ENCODE measurements at regions of chr1 and their contacts with region 1.

Region 1: GRCh38 chr1:162678439-162678838 is 46.2 kb downstream of the DDR2 start:
- DNase-seq: no peak
- H3K4me3 ChIP-seq: no peak overlapping the region
- H3K27ac ChIP-seq: peak overlapping the region; percentile 66 to 77 (median 71)
- H3K4me1 ChIP-seq: peaks cover 45 to 78% (median 76%) of the 10 kb centered on the region in 4 donors
- H3K27me3 ChIP-seq: no peaks in the 10 kb centered on the region
- CTCF ChIP-seq: no peak
- EP300 ChIP-seq: peak; percentile 15
- POLR2A ChIP-seq: no peak

Region 2: DNA sequence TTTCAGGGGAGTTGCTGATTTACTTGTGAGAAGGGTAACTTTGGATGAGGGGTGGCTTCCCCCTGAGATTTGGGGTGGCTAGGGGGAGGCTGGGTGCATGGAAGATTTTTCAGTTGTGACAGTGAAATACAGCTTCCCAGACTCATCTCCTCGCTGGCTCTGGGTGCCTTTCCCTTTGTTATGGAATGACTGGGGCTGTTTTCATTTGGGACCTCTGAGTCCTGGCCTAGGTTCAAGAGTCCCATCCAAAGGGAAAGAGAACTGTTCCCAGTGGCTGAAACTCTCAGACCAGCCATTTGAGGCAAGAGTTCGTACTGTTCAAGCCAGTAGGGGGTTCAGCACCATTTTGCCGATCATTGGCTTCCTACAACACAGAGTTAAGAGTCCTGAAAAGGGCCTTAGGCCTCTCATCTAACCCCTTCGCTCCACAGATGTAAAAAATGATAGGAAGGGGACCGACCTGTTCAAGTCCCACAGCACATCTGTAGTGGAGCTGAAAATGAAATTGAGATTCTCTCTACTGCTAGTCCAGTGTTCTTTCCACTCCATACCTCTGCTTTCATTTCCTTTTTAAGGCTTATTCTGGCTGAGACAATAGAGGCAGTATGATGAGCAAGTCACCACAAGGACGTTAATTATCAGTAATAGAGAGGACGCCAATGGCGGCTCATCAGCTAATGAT is 45.2 kb before region 1 on chr1:
- intact Hi-C with region 1: loop called (anchors 5 kb)
- DNase-seq: no peak
- H3K4me3 ChIP-seq: peak overlapping the region; percentile 57 to 69 (median 58)
- H3K27ac ChIP-seq: peak overlapping the region; percentile 89 to 90 (median 90)
- H3K4me1 ChIP-seq: peaks cover 23 to 81% (median 74%) of the 10 kb centered on the region in 4 donors
- H3K27me3 ChIP-seq: no peaks in the 10 kb centered on the region
- CTCF ChIP-seq: no peak
- EP300 ChIP-seq: no peak
- POLR2A ChIP-seq: no peak

Region 3: GRCh38 chr1:162726555-162726954 is 48.1 kb after region 1 on chr1:
- intact Hi-C with region 1: no loop called
- DNase-seq: no peak
- H3K4me3 ChIP-seq: no peak overlapping the region
- H3K27ac ChIP-seq: no peak overlapping the region
- H3K4me1 ChIP-seq: peaks cover 4 to 32% (median 29%) of the 10 kb centered on the region in 4 donors
- H3K27me3 ChIP-seq: no peaks in the 10 kb centered on the region
- CTCF ChIP-seq: no peak
- EP300 ChIP-seq: no peak
- POLR2A ChIP-seq: no peak